Caco-2 (cell line): ENCODE measurements at regions of chr11 and their contacts with region 1.

Region 1: DNA sequence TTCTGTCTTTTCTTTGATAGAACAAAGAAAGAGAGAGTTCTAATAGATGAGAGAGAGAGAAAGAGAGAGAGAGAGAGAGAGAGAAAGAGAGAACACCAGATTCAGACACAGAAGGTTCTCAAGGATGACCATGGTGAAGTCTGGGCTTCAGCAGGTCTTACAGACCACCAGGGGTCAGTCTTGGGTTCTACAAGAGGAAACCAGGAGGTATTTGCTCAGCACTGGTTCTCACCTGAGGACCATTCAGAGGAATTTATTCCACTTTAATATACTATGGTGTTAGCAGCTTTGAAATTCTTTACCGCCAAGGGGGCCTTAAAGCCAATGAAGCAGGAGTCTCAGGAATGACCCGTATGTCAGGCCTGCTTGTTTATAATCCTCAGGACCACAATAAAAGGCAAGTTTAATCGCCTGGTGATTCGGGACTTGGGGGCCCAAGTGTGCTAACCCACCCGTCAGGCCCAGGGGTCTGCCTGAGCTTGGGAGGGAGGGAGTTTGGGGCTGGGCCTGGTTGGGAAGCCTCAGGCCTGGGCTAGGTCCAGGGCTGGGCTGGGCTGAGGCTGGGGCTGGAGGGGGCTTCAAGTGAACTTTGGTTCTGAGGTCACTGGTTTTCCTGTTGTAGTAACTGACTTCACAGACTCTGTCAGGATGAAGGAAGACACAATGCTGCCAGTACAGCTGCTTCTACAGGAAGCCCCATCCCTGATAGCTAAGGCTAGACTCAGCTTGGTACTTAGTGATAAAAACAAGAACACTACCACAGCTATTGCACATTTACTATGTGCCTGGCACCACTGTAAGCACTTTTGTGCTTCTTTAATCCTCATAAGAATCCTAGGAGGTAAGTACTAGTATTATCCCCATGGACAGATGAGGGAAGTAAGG is 179.2 kb upstream of the ZBED5 start:
- DNase-seq: peak in 1 of 2 experiments; percentile 61
- H3K4me3 ChIP-seq: no peak overlapping the region
- H3K4me3 Mint-ChIP-seq: no peak overlapping the region
- H3K27ac Mint-ChIP-seq: no peak overlapping the region
- H3K4me1 ChIP-seq: no peaks in the 10 kb centered on the region
- H3K4me1 Mint-ChIP-seq: peaks cover 16% of the 10 kb centered on the region
- H3K27me3 ChIP-seq: no peaks in the 10 kb centered on the region
- H3K27me3 Mint-ChIP-seq: peaks cover 10% of the 10 kb centered on the region
- CTCF ChIP-seq: peak; percentile 68 to 93

Region 2: DNA sequence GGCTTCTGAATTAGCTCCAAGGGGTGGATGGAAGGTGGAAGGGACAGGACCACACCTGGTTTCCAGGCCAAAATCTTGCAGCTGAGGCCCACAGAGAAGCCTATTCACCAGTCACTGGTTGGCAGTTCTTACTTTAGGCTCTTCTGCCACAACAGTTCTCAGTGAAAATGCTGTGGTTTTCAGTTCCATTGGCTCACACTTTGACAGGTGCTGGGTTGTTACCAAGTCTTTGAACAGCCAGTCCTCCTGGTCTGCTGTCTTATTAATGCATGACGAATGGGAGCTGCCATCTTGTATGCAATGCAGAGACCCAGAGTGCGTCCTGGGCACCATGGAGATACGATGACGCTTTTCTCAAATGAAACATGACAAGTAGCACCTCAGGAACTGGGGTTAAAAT is 52.7 kb after region 1 on chr11:
- CTCF ChIA-PET with region 1: no interaction called
- POLR2A ChIA-PET with region 1: no interaction called
- intact Hi-C with region 1: no loop called
- DNase-seq: no peak
- H3K4me3 ChIP-seq: no peak overlapping the region
- H3K4me3 Mint-ChIP-seq: no peak overlapping the region
- H3K27ac Mint-ChIP-seq: no peak overlapping the region
- H3K4me1 ChIP-seq: no peaks in the 10 kb centered on the region
- H3K4me1 Mint-ChIP-seq: no peaks in the 10 kb centered on the region
- H3K27me3 ChIP-seq: no peaks in the 10 kb centered on the region; the same call in 1 of the 2 replicates
- H3K27me3 Mint-ChIP-seq: peaks cover 11% of the 10 kb centered on the region
- CTCF ChIP-seq: no peak

Region 3: DNA sequence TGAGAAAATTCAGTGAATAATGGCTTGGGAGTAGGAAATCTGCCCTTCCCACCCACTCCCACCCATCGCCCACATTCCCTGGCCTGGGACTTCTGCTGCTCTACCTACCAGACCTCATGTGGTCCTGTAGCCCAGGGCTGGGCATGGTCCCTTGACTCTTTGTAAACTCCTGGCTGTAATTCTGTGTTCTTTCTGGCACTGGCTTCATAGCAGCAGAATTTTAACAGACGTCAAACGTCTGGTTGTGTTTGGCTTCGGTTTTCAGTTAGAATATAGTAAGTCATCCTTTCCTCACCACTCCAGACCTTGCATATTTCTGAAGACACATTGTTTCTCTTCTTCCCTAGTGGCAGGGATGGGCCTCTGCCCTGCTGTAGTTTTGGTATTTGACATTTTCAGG is 105.3 kb after region 1 on chr11:
- CTCF ChIA-PET with region 1: no interaction called
- POLR2A ChIA-PET with region 1: no interaction called
- intact Hi-C with region 1: no loop called
- DNase-seq: no peak
- H3K4me3 ChIP-seq: no peak overlapping the region
- H3K4me3 Mint-ChIP-seq: no peak overlapping the region
- H3K27ac Mint-ChIP-seq: no peak overlapping the region
- H3K4me1 ChIP-seq: no peaks in the 10 kb centered on the region
- H3K4me1 Mint-ChIP-seq: peaks cover 6% of the 10 kb centered on the region
- H3K27me3 ChIP-seq: no peaks in the 10 kb centered on the region
- H3K27me3 Mint-ChIP-seq: no peaks in the 10 kb centered on the region
- CTCF ChIP-seq: no peak

Region 4: GRCh38 chr11:11157185-11157584 is 120.1 kb after region 1 on chr11:
- CTCF ChIA-PET with region 1: interaction called, 8 read pairs
- POLR2A ChIA-PET with region 1: no interaction called
- intact Hi-C with region 1: loop called (anchors 1 kb)
- DNase-seq: peak; percentile 53 to 68
- H3K4me3 ChIP-seq: no peak overlapping the region
- H3K4me3 Mint-ChIP-seq: no peak overlapping the region
- H3K27ac Mint-ChIP-seq: no peak overlapping the region
- H3K4me1 ChIP-seq: no peaks in the 10 kb centered on the region
- H3K4me1 Mint-ChIP-seq: no peaks in the 10 kb centered on the region
- H3K27me3 ChIP-seq: 0 out of 2 replicates have a peak, but pooled peaks cover 1% of the 10 kb centered on the region
- H3K27me3 Mint-ChIP-seq: no peaks in the 10 kb centered on the region
- CTCF ChIP-seq: peak; percentile 64 to 86

Region 5: GRCh38 chr11:11207428-11207827 is 170.3 kb after region 1 on chr11:
- CTCF ChIA-PET with region 1: no interaction called
- POLR2A ChIA-PET with region 1: no interaction called
- intact Hi-C with region 1: loop called (anchors 2 kb)
- DNase-seq: peak in 1 of 2 experiments; percentile 16
- H3K4me3 ChIP-seq: no peak overlapping the region
- H3K4me3 Mint-ChIP-seq: no peak overlapping the region
- H3K27ac Mint-ChIP-seq: no peak overlapping the region
- H3K4me1 ChIP-seq: no peaks in the 10 kb centered on the region
- H3K4me1 Mint-ChIP-seq: no peaks in the 10 kb centered on the region
- H3K27me3 ChIP-seq: peaks cover 2% of the 10 kb centered on the region; the same call in 1 of the 2 replicates
- H3K27me3 Mint-ChIP-seq: peaks cover 18% of the 10 kb centered on the region
- CTCF ChIP-seq: peak; percentile 16 to 30

Region 6: DNA sequence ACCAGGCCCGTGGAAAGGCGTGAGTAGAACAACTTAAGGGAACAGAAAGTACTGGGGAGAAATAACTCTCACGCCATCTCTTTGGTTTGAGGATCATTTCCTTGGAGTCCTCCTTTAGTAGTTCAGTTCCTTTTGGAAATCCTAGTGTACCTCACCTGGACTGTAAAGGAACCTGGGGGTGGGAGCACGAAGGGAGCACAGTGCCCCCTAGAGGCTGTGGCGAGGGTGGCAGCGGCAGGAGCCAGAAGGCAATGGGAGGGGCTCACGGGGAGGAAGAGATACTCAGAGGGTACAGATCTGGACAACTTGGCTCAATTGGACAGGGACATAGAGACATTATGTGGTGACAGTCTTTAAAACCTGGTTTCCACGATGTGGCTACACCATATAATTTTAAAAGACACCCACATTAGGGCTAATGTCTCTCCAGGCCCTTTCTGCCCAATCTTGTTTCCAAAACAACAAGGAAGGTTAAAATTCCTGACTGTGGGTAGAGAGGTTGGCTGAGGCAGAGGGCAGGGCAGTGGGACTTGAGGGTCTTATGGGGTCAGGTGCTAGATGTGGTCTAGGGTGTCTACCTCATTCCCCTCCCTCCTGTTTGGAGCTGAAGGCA is 229.0 kb after region 1 on chr11:
- CTCF ChIA-PET with region 1: no interaction called
- POLR2A ChIA-PET with region 1: no interaction called
- intact Hi-C with region 1: loop called (anchors 1 kb)
- DNase-seq: peak; percentile 58 to 78
- H3K4me3 ChIP-seq: no peak overlapping the region
- H3K4me3 Mint-ChIP-seq: no peak overlapping the region
- H3K27ac Mint-ChIP-seq: no peak overlapping the region
- H3K4me1 ChIP-seq: no peaks in the 10 kb centered on the region
- H3K4me1 Mint-ChIP-seq: no peaks in the 10 kb centered on the region
- H3K27me3 ChIP-seq: no peaks in the 10 kb centered on the region; the same call in 1 of the 2 replicates
- H3K27me3 Mint-ChIP-seq: peaks cover 5% of the 10 kb centered on the region
- CTCF ChIP-seq: peak; percentile 83 to 86